Endothelial cell of umbilical vein (primary cell): ENCODE measurements at regions of chr1 and their contacts with region 1.

Region 1: DNA sequence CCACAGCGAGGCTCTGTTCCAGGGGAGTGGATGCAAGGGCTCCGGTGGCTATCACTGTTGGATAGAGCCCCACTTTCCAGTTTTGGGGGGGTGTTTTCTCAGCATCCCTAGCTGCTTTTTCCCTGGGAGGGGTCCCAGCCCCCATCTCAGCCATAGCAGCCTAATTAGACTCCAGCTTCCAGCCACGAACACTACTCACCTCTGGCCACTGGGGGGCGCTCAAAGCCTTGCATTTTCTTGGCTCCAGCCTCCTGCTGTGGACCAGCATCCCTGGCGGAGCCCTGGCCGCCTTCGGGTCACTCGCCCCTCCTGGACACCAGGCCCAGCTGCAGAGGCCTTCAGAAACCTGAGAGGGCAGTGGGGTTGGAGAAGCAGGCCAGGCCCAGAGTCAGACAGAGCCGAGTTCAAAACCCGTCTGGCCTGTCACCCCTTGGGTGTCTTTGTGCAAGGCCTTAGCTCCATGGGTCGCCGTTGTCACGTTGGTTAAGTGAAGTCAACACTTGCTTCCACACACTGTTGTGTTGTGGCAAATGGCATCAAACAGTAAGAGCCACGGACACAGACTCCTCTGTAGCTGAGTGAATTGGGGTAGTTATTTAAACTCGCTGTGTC is 93.5 kb upstream of the ACTL8 start:
- DNase-seq: peak; percentile 42
- H3K4me3 ChIP-seq: no peak overlapping the region
- H3K27ac ChIP-seq: no peak overlapping the region
- H3K4me1 ChIP-seq: no peaks in the 10 kb centered on the region
- H3K27me3 ChIP-seq: no peaks in the 10 kb centered on the region
- CTCF ChIP-seq: peak; percentile 87 to 90
- POLR2A ChIP-seq: no peak

Region 2: DNA sequence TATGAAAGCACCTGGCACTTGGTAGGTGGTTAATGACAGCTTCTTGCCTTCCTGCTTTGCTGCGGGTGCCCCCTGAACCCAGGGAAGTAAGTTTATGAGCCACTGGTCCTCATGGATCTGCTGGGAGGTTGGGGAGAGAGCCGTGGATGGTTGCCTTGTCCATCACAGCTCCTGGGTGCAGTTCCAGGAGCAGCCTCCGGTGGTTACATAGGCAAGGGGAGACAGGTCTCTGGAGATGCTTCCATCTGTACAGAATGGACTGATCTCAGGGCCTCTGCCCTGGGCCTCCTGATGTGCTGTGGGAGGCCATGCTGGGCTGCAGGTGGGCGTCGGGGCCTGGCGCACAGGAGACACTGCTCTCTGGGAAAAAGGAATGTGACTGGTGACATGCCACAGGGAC is 153.7 kb before region 1 on chr1:
- CTCF ChIA-PET with region 1: no interaction called
- POLR2A ChIA-PET with region 1: no interaction called
- dilution Hi-C with region 1: no loop called
- intact Hi-C with region 1: no loop called
- DNase-seq: no peak
- H3K4me3 ChIP-seq: no peak overlapping the region
- H3K27ac ChIP-seq: no peak overlapping the region
- H3K4me1 ChIP-seq: no peaks in the 10 kb centered on the region
- H3K27me3 ChIP-seq: no peaks in the 10 kb centered on the region
- CTCF ChIP-seq: peak in 1 of 2 donors; percentile 3
- POLR2A ChIP-seq: no peak

Region 3: DNA sequence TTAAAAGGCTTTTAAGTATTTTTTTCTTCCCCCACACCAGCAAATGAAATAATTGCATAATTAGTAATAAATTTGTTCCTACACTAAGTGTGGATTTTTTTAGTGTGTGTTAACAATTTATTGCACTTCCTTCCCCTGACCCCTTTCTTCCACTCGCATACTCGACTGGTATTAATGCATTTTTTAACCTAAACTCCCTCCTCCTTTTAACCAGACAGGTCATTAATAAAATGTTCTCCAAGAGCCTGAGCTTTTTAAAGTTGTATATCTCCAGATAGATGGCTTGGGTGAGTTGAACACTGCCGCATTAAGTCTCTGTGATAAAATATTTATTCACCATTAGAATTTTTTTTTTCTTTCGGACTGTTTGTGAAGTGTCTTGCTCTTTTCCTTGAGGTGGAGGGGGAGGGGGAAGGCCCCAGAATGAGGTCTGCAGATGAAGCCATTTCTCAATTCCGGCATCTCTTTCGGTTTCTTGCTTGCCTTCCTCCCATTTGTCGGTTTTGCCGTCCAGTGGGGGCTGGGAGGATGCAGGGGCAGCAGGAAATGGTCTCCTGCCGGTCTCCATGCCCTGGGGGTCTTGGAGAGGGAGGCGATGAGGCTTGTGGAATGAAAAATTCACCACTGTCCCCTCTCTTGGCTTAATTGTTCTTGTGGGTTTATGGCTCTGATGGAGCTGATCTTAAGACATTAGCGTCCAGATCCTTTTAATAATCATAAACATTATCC is 29.4 kb after region 1 on chr1:
- CTCF ChIA-PET with region 1: interaction called, 115 read pairs
- POLR2A ChIA-PET with region 1: no interaction called
- dilution Hi-C with region 1: no loop called
- intact Hi-C with region 1: loop called (anchors 1 kb)
- DNase-seq: no peak
- H3K4me3 ChIP-seq: no peak overlapping the region
- H3K27ac ChIP-seq: no peak overlapping the region
- H3K4me1 ChIP-seq: no peaks in the 10 kb centered on the region
- H3K27me3 ChIP-seq: no peaks in the 10 kb centered on the region
- CTCF ChIP-seq: no peak
- POLR2A ChIP-seq: no peak

Region 4: GRCh38 chr1:18100491-18101063 is 438.9 kb after region 1 on chr1:
- CTCF ChIA-PET with region 1: interaction called, 27 read pairs
- POLR2A ChIA-PET with region 1: no interaction called
- dilution Hi-C with region 1: no loop called
- intact Hi-C with region 1: no loop called
- DNase-seq: peak; percentile 20
- H3K4me3 ChIP-seq: no peak overlapping the region
- H3K27ac ChIP-seq: no peak overlapping the region
- H3K4me1 ChIP-seq: no peaks in the 10 kb centered on the region
- H3K27me3 ChIP-seq: no peaks in the 10 kb centered on the region
- CTCF ChIP-seq: peak; percentile 53 to 70
- POLR2A ChIP-seq: no peak

Region 5: GRCh38 chr1:18581420-18581880 is 919.8 kb after region 1 on chr1:
- CTCF ChIA-PET with region 1: interaction called, 161 read pairs
- POLR2A ChIA-PET with region 1: no interaction called
- dilution Hi-C with region 1: no loop called
- intact Hi-C with region 1: loop called (anchors 1 kb)
- DNase-seq: peak; percentile 8
- H3K4me3 ChIP-seq: no peak overlapping the region
- H3K27ac ChIP-seq: no peak overlapping the region
- H3K4me1 ChIP-seq: no peaks in the 10 kb centered on the region
- H3K27me3 ChIP-seq: no peaks in the 10 kb centered on the region
- CTCF ChIP-seq: peak; percentile 68 to 84
- POLR2A ChIP-seq: no peak